ENCODE measurements at regions of chr11 and their contacts with region 1.

Region 1: GRCh38 chr11:68257475-68258362 is 14.1 kb downstream of the C11orf24 start:
- DNase-seq: peak; percentile 87
- CTCF ChIP-seq: peak; percentile 72

Region 2: GRCh38 chr11:68002575-68002937 is 255.2 kb before region 1 on chr11:
- CTCF ChIA-PET with region 1: no interaction called
- POLR2A ChIA-PET with region 1: no interaction called
- DNase-seq: peak; percentile 58
- CTCF ChIP-seq: no peak

Region 3: DNA sequence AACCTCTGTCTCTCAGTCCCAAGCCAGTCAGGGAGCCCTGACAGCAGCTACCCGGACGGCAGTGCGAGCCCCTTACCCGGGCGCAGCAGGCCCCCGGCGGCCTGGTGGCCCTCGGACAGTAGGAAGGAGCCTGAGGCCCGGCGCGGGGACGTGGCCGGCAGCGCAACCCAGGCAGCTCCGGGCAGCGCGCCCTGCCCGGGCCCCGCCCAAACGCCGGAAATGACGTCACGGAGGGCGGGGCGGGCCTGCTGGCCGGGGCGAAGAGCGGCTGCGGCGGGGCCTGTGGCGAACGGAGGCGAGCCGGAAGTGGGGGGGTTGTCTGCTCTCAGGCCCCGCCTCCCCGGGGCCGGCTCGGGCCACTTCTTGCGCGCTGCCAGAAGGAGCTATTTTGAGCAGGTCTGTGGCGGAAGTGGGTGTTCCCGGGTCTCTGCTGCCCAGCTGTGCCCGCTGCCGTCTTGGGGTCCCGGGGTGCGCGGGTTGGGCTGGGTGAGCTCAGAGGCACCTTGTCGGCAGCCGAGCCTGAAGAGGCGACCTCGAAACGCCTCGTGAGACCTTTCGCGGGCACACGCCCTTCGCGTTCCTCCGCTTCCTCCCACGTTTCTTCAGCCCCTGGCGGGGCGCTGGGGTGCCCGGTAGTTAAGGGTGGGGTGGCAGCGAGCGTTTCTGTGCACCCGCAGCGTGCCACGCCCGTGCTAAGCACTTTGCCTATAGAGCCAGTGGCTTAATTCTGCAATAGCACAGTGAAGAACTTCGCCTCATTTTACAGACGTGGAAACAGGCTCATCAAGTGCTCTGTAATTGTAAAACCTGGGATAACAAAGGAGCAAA is 14.3 kb after region 1 on chr11 and contains the start of gene C11orf24:
- CTCF ChIA-PET with region 1: interaction called, 41 read pairs
- POLR2A ChIA-PET with region 1: interaction called, 7 read pairs
- DNase-seq: peak; percentile 98
- CTCF ChIP-seq: no peak

Region 4: GRCh38 chr11:68282141-68282970 is 24.6 kb after region 1 on chr11:
- CTCF ChIA-PET with region 1: interaction called, 14 read pairs
- POLR2A ChIA-PET with region 1: no interaction called
- DNase-seq: peak; percentile 68
- CTCF ChIP-seq: no peak

Region 5: GRCh38 chr11:68312117-68312779 is 54.5 kb after region 1 on chr11 and contains the start of gene LRP5:
- CTCF ChIA-PET with region 1: interaction called, 10 read pairs
- POLR2A ChIA-PET with region 1: no interaction called
- DNase-seq: peak; percentile 68
- CTCF ChIP-seq: peak; percentile 16

Measured in GM10248 (cell line).